Sciatic nerve (tissue), 2 donors: ENCODE measurements at regions of chr10 and their contacts with region 1.

Region 1: DNA sequence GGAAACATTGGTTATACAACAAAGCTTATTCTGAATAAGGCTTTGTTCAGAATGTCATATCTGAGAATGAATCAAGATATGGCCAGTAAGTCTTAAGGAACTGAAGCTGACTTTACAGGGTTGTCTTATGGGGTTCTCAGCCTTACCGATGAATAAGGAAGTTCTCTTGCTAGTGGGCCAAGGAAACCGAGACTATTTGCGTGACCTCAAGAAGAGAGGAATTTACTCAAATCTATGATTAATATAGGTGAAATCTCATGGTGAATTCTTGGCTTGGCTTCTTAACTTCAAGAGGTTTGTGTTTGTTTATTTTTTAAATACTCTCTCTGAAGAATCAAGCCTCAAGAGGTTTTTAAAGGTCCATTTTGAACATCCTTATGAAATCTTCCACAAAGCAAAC is 4.7 kb upstream of the MRLN start:
- DNase-seq: no peak
- ATAC-seq: no peak

Region 2: DNA sequence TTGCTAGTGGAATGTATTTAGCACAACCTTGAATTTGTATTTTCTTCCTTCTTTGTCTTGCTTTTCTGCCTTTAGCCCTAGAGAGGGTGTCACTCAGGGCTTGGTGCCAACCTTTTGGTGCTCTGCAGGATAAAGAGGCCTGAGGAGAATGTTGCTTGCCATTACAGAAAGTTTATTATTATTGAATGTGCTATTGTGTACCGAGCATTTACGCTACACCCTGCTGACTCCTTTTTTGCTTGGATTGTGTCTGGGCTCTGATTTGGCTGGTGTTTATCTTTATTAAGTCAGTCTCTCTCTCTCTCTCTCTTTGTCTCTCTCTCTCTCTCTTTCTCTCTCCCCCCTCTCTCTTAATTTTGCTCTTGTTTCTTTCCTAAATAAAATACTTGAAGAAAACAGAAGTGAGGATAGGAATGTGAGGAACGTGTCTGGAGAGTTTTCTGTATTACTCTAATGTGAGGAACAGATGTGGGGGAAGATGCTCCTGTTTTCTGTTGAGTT is 865.9 kb before region 1 on chr10:
- intact Hi-C with region 1: no loop called
- DNase-seq: no peak
- ATAC-seq: peak; percentile 11

Region 3: GRCh38 chr10:60998932-60999331 is 1241.0 kb after region 1 on chr10:
- intact Hi-C with region 1: loop called (anchors 5 kb)
- DNase-seq: no peak
- ATAC-seq: no peak